BJ (cell line): ENCODE measurements at regions of chr5 and their contacts with region 1.

Region 1: GRCh38 chr5:144162686-144163085 is 7.8 kb downstream of the YIPF5 start:
- DNase-seq: no peak
- H3K4me3 ChIP-seq: no peak overlapping the region
- H3K27me3 ChIP-seq: no peaks in the 10 kb centered on the region
- CTCF ChIP-seq: no peak

Region 2: DNA sequence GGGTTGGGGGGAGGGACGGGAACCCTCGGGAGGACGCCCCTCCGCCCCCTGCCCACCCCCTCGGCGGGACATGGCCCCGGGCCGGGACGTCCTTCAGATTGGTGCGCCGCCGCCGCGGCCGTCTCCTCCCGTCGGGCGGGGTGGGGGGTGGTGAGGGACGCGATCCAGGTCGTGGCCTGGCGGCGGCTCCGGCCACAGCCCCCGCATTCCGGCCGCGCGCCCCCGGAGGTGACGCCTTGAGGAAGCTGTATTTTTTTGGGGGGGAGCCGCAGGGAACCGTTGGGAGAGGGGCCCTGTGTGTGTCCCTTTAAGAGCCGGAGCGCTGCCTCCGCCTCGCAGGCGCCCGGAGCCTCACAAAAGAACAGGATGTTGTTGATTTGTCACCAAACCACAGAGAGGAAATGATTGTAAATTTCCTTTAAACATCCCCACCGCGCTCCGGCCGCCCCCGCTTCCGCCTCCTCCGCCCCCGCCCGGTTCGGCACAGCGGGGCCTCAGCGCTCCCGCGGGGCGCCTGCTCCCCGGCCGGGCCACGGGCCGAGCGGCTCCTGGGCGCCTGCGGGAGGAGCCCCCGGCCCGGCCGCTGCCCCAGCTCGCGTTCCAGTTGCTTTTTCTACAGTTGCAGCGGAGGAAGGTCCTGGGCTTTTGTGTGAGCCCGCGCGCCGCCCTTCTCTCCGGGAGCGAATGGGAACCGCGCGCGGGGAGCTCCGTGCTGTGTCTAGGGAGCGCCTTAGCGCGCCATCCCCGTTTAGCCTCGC is 1805.8 kb before region 1 on chr5:
- CTCF ChIA-PET with region 1: no interaction called
- POLR2A ChIA-PET with region 1: interaction called, 20 read pairs
- DNase-seq: peak; percentile 52
- H3K4me3 ChIP-seq: peak overlapping the region; percentile 61
- H3K27me3 ChIP-seq: no peaks in the 10 kb centered on the region
- CTCF ChIP-seq: no peak

Region 3: DNA sequence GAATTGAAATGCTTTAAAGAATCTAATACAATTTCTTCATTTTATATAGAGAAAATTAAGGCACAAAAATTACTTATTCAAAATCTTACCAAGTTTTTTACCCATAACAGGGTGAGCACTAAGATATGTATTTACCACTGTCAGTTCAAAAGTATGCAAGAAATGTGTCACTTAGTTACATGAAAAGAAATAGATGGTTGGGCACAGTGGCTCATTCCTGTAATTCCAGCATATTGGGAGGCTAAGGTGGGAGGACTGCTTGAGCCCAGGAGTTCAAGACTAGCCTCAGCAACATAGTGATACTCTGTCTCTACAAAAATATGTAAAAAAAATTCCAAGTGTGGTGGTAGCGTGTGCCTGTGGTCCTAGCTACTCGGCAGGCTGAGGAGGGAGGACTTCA is 11.7 kb before region 1 on chr5:
- CTCF ChIA-PET with region 1: no interaction called
- POLR2A ChIA-PET with region 1: no interaction called
- DNase-seq: no peak
- H3K4me3 ChIP-seq: no peak overlapping the region
- H3K27me3 ChIP-seq: no peaks in the 10 kb centered on the region
- CTCF ChIP-seq: no peak